Activated T-helper 1 cell treated with anti-CD3 and anti-CD28 coated beads, Interleukin-12 subunit alpha, Interleukin-12 subunit beta, Interleukin-2, Interleukin-4 antibody, amounts not matched to agents 30 ng/mL and 10 ng/mL and 1 ng/mL, durations not matched to agents 14 hours and 24 hours and 36 hours (primary cell): ENCODE measurements at regions of chr10 and their contacts with region 1.

Region 1: DNA sequence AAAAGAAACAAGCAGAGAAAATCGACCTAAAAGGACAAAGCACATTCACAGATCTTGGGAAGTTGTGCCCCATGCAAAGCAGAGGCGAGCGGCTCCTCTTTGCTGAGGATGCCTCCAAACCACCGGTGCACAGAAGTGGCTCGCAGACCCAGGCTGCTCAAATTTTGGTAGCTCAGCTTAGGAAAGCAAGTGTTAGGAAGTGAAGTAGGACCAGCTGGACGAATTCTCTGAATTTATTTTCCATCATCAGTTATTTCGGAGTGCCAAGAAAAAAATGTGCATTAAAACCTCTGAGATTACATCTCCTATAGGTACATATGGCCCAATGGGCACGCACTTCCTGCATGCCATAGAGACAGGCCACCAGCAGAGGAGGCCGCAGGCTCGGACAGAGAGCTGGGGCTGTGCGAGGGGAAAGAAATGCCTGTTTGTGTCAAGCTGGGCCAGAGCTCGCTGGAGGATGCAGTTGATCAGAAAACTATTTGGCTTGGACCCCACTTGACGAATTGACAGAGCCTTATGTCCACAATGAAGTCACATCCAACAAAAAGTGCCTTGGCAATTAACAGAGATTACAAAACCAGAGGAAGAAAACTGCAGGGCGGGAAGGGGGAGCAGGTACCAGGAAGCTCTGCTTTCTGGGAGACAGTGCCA is 122.3 kb upstream of the LYZL2 start:
- DNase-seq: no peak
- H3K4me3 Mint-ChIP-seq: peak overlapping the region; percentile 43
- H3K27ac Mint-ChIP-seq: peak overlapping the region; percentile 80
- H3K4me1 Mint-ChIP-seq: peaks cover 61% of the 10 kb centered on the region
- H3K27me3 Mint-ChIP-seq: no peaks in the 10 kb centered on the region

Region 2: GRCh38 chr10:30294479-30295240 is 457.1 kb before region 1 on chr10:
- intact Hi-C with region 1: no loop called
- DNase-seq: no peak
- H3K4me3 Mint-ChIP-seq: no peak overlapping the region
- H3K27ac Mint-ChIP-seq: no peak overlapping the region
- H3K4me1 Mint-ChIP-seq: no peaks in the 10 kb centered on the region
- H3K27me3 Mint-ChIP-seq: peaks cover 19% of the 10 kb centered on the region

Region 3: GRCh38 chr10:30736685-30737232 is 15.0 kb before region 1 on chr10:
- intact Hi-C with region 1: loop called (anchors 1 kb)
- DNase-seq: peak; percentile 21
- H3K4me3 Mint-ChIP-seq: no peak overlapping the region
- H3K27ac Mint-ChIP-seq: peak overlapping the region; percentile 84
- H3K4me1 Mint-ChIP-seq: peaks cover 24% of the 10 kb centered on the region
- H3K27me3 Mint-ChIP-seq: no peaks in the 10 kb centered on the region